ENCODE measurements at regions of chr21 and their contacts with region 1.

Region 1: DNA sequence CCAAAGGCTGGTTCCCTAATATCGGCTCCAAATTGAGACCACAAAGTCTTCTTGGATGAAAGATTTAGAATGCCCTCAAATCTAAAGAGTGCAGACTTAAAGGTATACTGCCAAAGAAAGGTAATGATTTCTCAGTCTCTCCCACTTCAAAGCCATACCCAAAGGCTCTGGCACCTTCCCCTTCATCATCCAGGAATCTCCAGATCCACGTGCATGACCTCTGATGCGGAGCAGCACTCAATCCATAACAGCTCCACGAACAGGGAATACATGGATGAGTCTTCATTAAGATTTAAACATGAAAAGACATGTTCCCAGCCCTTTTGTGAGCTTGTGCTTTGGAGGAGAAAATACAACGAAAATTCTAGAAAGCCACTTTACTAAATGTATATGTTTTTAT is 453.9 kb downstream of the DSCAM start:
- DNase-seq: no peak
- ATAC-seq: no peak
- H3K4me3 ChIP-seq: no peak overlapping the region
- H3K27ac ChIP-seq: no peak overlapping the region
- H3K4me1 ChIP-seq: no peaks in the 10 kb centered on the region
- H3K27me3 ChIP-seq: no peaks in the 10 kb centered on the region

Region 2: DNA sequence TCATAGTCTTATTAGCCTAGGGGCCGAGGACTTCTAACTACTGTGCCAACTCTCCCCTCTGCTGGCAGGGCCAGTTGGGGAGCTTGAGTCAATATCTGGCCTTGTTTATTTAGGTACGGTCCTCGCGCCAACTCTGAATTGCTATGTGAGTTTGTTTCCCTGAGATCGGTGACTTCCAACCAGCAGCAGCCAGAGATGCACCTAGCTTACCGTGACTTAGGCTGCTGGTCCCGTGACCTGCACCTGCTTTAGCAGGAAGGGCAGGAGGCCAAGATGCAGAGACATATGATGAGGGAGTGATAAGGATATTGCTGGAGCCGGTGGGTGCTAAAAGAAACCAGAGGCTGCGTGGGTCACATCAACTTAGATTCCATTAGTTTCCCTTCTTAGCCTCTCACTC is 74.6 kb before region 1 on chr21:
- intact Hi-C with region 1: loop called in 1 of 2 experiments (anchors 10 kb)
- DNase-seq: no peak
- ATAC-seq: no peak
- H3K4me3 ChIP-seq: no peak overlapping the region
- H3K27ac ChIP-seq: no peak overlapping the region
- H3K4me1 ChIP-seq: no peaks in the 10 kb centered on the region
- H3K27me3 ChIP-seq: no peaks in the 10 kb centered on the region

Region 3: GRCh38 chr21:41475714-41476420 is 1082.8 kb after region 1 on chr21:
- intact Hi-C with region 1: no loop called
- DNase-seq: peak in 1 of 2 donors; percentile 34
- ATAC-seq: no peak
- H3K4me3 ChIP-seq: no peak overlapping the region
- H3K27ac ChIP-seq: no peak overlapping the region
- H3K4me1 ChIP-seq: no peaks in the 10 kb centered on the region
- H3K27me3 ChIP-seq: no peaks in the 10 kb centered on the region